CD14-positive monocyte (primary cell): ENCODE measurements at regions of chr9 and their contacts with region 1.

Region 1: DNA sequence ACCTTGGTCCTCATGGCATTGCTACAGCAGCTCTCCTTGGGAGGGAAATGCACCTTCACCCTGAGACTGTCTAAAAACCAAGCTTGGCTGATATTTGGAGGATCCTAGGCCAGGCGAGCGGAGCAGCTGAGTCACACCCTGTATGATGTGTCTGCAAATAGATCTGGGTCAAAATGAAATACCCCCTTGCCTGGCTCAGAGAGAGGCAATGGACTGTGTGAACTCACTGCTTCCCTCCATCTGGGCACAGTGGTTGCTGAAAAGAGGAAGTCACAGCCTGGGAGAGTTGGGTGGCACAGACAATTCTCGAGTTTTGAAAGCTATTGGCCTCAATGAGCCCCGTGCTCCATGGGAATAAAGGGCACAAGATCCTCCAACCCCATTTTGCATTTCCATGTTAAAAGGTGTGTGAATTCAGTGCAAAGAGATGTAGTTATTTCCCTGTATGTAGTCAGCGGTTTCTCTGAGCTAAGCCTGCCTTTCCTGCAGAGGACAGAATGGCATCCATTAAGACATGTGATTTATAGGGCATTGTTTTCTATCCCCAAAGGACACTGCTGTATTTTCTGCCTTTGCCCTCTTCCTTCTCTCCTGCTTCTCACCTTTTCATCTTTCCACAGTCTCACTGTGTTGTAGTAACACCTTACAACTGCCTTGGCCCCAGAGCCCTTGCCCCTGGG is 177.2 kb downstream of the GADD45G start:
- DNase-seq: peak; percentile 62 to 82 (median 67)
- H3K4me3 ChIP-seq: no peak overlapping the region
- H3K4me3 Mint-ChIP-seq: peak overlapping the region in 1 of 2 donors; percentile 8
- H3K27ac ChIP-seq: no peak overlapping the region
- H3K27ac Mint-ChIP-seq: peak overlapping the region in 4 of 7 donors; percentile 33 to 63 (median 58)
- H3K4me1 ChIP-seq: peaks cover 27 to 32% of the 10 kb centered on the region in 2 donors
- H3K4me1 Mint-ChIP-seq: peaks cover 29% of the 10 kb centered on the region
- H3K27me3 ChIP-seq: peaks cover 7% of the 10 kb centered on the region in 2 donors
- H3K27me3 Mint-ChIP-seq: peaks cover 3 to 23% (median 21%) of the 10 kb centered on the region in 3 donors
- CTCF ChIP-seq: no peak

Region 2: DNA sequence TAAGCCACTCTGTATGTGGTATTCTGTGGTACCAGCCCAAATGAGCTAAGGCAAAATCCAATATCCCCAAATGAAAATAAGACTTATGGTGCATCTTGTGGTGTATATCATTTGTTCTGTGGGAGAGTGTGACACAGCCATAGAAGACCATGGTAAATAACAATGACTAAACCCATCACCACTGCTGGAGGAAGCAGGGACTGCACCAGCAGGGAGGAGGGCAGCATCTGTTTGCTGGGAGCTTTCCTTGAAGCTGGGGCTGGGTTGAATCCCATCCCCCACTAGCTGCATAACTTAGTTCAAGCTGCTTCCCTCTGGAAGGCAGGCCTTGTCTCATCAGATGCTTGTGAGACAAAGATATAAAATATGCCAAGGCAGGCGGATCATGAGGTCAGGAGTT is 163.0 kb before region 1 on chr9:
- intact Hi-C with region 1: loop called in 1 of 2 experiments (anchors 10 kb)
- DNase-seq: no peak
- H3K4me3 ChIP-seq: no peak overlapping the region
- H3K4me3 Mint-ChIP-seq: no peak overlapping the region
- H3K27ac ChIP-seq: no peak overlapping the region
- H3K27ac Mint-ChIP-seq: no peak overlapping the region
- H3K4me1 ChIP-seq: peaks cover 6 to 9% of the 10 kb centered on the region in 2 donors
- H3K4me1 Mint-ChIP-seq: peaks cover 11% of the 10 kb centered on the region
- H3K27me3 ChIP-seq: no peaks in the 10 kb centered on the region
- H3K27me3 Mint-ChIP-seq: peaks cover 9 to 10% (median 10%) of the 10 kb centered on the region in 3 donors
- CTCF ChIP-seq: no peak

Region 3: DNA sequence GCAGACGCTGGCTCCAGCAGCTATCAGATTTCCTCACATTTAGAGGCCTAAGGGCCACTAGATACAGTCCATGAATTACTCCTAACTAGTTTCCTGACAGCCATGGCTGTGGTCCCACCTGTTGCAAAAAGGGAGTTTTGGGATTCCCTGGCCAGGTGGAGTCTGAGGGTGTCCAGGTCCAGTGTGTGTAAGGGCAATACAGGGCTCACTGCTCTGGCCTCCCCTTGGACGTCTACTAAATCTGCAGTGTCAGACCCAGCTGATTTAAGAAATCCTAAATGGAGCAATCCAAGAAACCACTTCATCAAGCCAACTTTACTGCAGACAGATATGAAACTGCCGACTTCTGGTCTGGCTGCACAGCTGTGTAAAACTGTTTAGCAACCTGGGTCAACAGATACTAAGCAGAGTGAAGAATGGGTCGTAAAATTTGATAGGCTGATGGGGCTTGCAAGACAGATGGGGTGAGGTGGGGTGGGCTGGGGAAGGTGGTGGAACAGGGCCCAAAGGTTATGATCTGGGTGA is 60.7 kb before region 1 on chr9:
- intact Hi-C with region 1: no loop called
- DNase-seq: peak in 2 of 3 donors; percentile 25 to 35
- H3K4me3 ChIP-seq: no peak overlapping the region
- H3K4me3 Mint-ChIP-seq: peak overlapping the region in 1 of 2 donors; percentile 20
- H3K27ac ChIP-seq: no peak overlapping the region
- H3K27ac Mint-ChIP-seq: peak overlapping the region in 1 of 7 donors; percentile 25
- H3K4me1 ChIP-seq: peaks cover 26 to 29% of the 10 kb centered on the region in 2 donors
- H3K4me1 Mint-ChIP-seq: peaks cover 43% of the 10 kb centered on the region
- H3K27me3 ChIP-seq: no peaks in the 10 kb centered on the region
- H3K27me3 Mint-ChIP-seq: peaks cover 0 to 1% (median 0%) of the 10 kb centered on the region in 3 donors
- CTCF ChIP-seq: no peak